ENCODE measurements at regions of chr13 and their contacts with region 1.

Region 1: GRCh38 chr13:80979035-80979641 is 638.2 kb upstream of the SPRY2 start:
- DNase-seq: peak in 1 of 2 experiments; percentile 15
- H3K4me3 ChIP-seq: no peak overlapping the region
- H3K27ac ChIP-seq: no peak overlapping the region
- H3K4me1 ChIP-seq: no peaks in the 10 kb centered on the region; a peak in 1 of 7 replicates
- H3K27me3 ChIP-seq: no peaks in the 10 kb centered on the region
- CTCF ChIP-seq: peak; percentile 48 to 78 (median 74)
- EP300 ChIP-seq: no peak
- POLR2A ChIP-seq: no peak
- RAD21 ChIP-seq: peak; percentile 87 to 92

Region 2: DNA sequence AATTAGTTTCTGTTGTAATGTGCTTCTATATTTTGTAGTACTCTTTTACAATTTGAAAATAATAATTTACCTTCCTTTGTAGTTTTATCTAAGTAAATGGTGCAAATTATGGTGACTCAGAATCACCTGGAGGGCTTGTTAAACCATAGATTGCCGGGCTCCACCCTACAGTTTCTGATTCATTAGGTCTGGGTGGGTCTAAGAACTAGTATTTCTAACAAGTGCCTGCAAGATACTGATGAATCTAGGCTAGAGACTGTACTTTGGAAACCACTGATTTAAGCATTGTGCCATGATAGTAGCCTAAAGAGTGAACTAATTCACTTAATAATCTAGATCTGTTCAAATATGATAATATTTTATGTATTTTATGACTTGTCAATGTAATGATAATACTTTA is 200.8 kb before region 1 on chr13:
- CTCF ChIA-PET with region 1: no interaction called
- POLR2A ChIA-PET with region 1: no interaction called
- DNase-seq: no peak
- H3K4me3 ChIP-seq: no peak overlapping the region
- H3K27ac ChIP-seq: no peak overlapping the region
- H3K4me1 ChIP-seq: peaks cover 0 to 3% (median 2%) of the 10 kb centered on the region in 4 experiments; a peak in 4 of 7 replicates
- H3K27me3 ChIP-seq: no peaks in the 10 kb centered on the region
- CTCF ChIP-seq: no peak
- EP300 ChIP-seq: no peak
- POLR2A ChIP-seq: no peak
- RAD21 ChIP-seq: no peak

Region 3: GRCh38 chr13:81017513-81018152 is 38.5 kb after region 1 on chr13:
- CTCF ChIA-PET with region 1: interaction called, 41 read pairs
- POLR2A ChIA-PET with region 1: no interaction called
- DNase-seq: no peak
- H3K4me3 ChIP-seq: no peak overlapping the region
- H3K27ac ChIP-seq: no peak overlapping the region
- H3K4me1 ChIP-seq: no peaks in the 10 kb centered on the region
- H3K27me3 ChIP-seq: no peaks in the 10 kb centered on the region
- CTCF ChIP-seq: peak in 2 of 3 experiments; percentile 29 to 40; a peak in 2 of 4 replicates
- EP300 ChIP-seq: no peak
- POLR2A ChIP-seq: no peak
- RAD21 ChIP-seq: peak; percentile 65 to 76

Measured in H1 (cell line).